ENCODE measurements at regions of chr6 and their contacts with region 1.

Region 1: GRCh38 chr6:142692942-142693341 is 252.0 kb downstream of the HIVEP2 start:
- DNase-seq: peak; percentile 72
- H3K4me3 Mint-ChIP-seq: no peak overlapping the region
- H3K27ac Mint-ChIP-seq: no peak overlapping the region
- H3K4me1 Mint-ChIP-seq: peaks cover 15% of the 10 kb centered on the region
- H3K27me3 Mint-ChIP-seq: no peaks in the 10 kb centered on the region

Region 2: DNA sequence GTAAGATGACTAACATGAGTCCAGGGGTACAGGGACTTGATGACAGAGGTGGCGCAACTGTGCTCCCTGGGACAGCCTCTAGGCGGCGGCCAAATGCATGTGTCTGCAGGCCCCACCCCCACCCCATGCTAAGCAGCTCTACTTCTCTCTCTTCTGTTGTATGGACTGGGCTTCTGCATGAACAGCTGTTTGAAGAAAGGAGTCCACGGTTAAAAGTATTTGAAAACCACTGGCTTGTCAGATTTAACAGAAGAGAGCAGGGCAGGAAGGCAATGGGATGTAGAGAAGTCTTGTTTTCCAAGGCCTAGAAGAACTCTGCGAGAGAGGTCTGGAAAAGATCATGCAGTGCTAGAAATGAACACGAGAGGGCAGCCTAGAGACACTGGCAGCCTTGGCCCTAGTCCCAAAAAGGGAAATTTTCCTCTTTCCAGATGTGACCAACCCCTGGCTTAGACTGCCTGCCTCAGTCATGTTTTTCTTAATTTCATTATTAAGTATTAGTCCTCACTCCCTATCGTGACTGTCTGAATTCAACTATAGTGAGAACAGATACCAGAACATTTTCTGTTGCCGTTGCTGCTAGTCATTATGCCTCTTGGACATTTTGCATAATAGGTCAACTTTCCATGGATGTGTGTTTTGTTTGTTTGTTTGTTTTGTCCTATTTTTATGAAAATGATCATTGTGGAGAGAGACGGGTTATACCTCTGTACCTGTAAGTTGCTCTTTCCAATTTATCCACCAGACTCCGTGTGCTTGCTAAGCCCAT is 126.1 kb before region 1 on chr6:
- CTCF ChIA-PET with region 1: interaction called, 10 read pairs
- POLR2A ChIA-PET with region 1: no interaction called
- intact Hi-C with region 1: loop called (anchors 2 kb)
- DNase-seq: peak; percentile 63
- H3K4me3 Mint-ChIP-seq: no peak overlapping the region
- H3K27ac Mint-ChIP-seq: no peak overlapping the region
- H3K4me1 Mint-ChIP-seq: peaks cover 49% of the 10 kb centered on the region
- H3K27me3 Mint-ChIP-seq: no peaks in the 10 kb centered on the region

Region 3: GRCh38 chr6:142617158-142617557 is 75.8 kb before region 1 on chr6:
- CTCF ChIA-PET with region 1: no interaction called
- POLR2A ChIA-PET with region 1: no interaction called
- intact Hi-C with region 1: no loop called
- DNase-seq: no peak
- H3K4me3 Mint-ChIP-seq: no peak overlapping the region
- H3K27ac Mint-ChIP-seq: no peak overlapping the region
- H3K4me1 Mint-ChIP-seq: no peaks in the 10 kb centered on the region
- H3K27me3 Mint-ChIP-seq: no peaks in the 10 kb centered on the region

Region 4: DNA sequence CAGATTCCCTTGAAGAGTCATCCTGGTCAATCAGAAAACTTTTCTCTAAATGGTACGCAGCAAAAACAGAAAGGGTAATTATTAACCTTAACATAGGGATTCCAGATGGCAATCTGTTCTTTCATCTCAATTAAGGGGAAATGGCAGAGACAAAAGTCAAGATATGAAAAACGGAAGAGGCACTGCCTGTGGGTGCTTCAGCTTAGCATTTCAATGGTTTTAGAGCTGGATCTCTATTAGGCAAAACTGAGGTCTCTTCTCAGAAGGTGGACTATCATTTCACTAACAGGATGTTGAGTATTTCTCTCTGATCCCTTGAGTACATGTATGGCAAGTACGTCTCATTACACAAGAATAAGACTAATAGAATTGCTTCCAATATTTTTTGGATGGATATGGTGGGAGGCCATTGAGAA is 44.9 kb before region 1 on chr6:
- CTCF ChIA-PET with region 1: no interaction called
- POLR2A ChIA-PET with region 1: no interaction called
- intact Hi-C with region 1: no loop called
- DNase-seq: no peak
- H3K4me3 Mint-ChIP-seq: no peak overlapping the region
- H3K27ac Mint-ChIP-seq: no peak overlapping the region
- H3K4me1 Mint-ChIP-seq: no peaks in the 10 kb centered on the region
- H3K27me3 Mint-ChIP-seq: peaks cover 3% of the 10 kb centered on the region

Region 5: DNA sequence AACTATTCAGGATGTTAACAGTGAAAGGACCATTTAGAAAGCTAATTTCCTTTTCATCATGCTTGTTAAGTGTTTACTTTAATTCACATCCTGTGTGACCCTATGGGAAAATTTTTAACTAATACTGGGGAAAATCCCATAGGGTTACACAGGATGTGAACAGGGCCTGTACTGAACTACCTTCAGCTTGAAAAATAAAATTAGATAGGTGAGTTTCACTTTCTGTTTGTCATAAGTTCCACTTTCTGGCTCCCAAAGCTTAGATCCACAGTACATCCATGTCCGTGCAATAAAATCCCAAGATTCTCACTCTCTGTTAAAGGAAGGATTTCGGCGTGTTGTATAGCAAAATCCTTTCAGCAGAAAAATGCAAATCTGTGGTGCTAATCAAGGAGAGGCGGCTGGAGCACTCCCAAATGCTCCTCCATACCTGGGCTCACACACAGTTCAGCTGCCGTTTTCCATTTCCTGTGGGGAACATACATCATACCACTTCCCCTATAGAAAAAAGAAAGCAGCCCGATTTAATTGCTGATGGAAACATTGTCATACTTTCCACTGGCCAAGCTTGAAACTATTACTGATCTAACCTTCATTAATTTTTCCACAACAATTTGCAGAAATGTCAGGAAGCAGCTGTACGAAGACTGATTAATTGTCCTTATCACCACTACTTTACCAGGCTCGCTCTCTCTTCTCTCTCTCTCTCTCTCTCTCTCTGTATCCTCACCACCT is 126.8 kb after region 1 on chr6:
- CTCF ChIA-PET with region 1: interaction called, 3 read pairs
- POLR2A ChIA-PET with region 1: no interaction called
- intact Hi-C with region 1: loop called (anchors 5 kb)
- DNase-seq: peak; percentile 63
- H3K4me3 Mint-ChIP-seq: peak overlapping the region; percentile 79
- H3K27ac Mint-ChIP-seq: peak overlapping the region; percentile 97
- H3K4me1 Mint-ChIP-seq: peaks cover 77% of the 10 kb centered on the region
- H3K27me3 Mint-ChIP-seq: peaks cover 2% of the 10 kb centered on the region

Region 6: DNA sequence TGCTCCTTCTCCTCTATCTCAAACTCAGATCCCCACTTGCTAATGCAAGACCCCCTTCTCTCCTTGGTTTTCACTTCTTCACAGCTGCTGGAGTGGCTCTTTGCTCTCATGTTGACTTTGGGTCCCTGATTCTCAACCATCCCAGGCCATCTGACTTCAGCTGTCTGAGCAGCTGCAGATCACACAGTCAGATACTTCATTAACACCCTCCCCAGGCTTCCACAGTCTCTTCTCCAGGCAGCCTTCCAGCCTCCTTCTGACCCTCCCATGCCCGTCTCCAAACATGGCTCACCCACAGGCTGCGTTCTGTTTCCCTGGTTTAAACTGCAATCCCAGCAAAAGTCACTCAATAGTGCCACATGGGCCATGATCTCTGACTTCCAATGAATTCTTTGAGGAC is 186.6 kb after region 1 on chr6:
- CTCF ChIA-PET with region 1: no interaction called
- POLR2A ChIA-PET with region 1: no interaction called
- intact Hi-C with region 1: no loop called
- DNase-seq: no peak
- H3K4me3 Mint-ChIP-seq: no peak overlapping the region
- H3K27ac Mint-ChIP-seq: no peak overlapping the region
- H3K4me1 Mint-ChIP-seq: peaks cover 88% of the 10 kb centered on the region
- H3K27me3 Mint-ChIP-seq: no peaks in the 10 kb centered on the region

Region 7: DNA sequence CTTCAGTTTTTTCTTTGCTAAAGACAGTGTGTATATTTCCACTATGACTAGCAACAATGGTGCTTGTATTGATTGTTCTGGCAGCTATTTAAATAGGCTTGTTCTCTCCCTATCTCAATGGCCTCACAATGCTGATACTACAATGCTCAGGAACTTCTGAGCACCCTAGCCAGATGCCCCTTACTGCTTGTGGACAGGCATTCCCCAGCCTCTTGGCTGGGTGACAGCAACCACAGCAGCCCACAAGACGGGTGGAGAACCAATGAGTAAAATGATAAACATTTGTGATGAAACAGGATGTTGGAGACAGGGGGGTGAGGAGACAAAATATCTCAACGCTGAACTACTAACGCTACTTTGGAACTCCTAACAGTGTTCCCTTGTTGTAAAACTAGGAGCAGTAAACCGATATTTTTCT is 209.7 kb after region 1 on chr6:
- CTCF ChIA-PET with region 1: no interaction called
- POLR2A ChIA-PET with region 1: no interaction called
- intact Hi-C with region 1: loop called (anchors 5 kb)
- DNase-seq: peak; percentile 87
- H3K4me3 Mint-ChIP-seq: peak overlapping the region; percentile 56
- H3K27ac Mint-ChIP-seq: peak overlapping the region; percentile 87
- H3K4me1 Mint-ChIP-seq: peaks cover 59% of the 10 kb centered on the region
- H3K27me3 Mint-ChIP-seq: no peaks in the 10 kb centered on the region

Region 8: GRCh38 chr6:143279385-143279784 is 586.4 kb after region 1 on chr6:
- CTCF ChIA-PET with region 1: interaction called, 8 read pairs
- POLR2A ChIA-PET with region 1: no interaction called
- intact Hi-C with region 1: loop called (anchors 2 kb)
- DNase-seq: peak; percentile 13
- H3K4me3 Mint-ChIP-seq: no peak overlapping the region
- H3K27ac Mint-ChIP-seq: no peak overlapping the region
- H3K4me1 Mint-ChIP-seq: peaks cover 2% of the 10 kb centered on the region
- H3K27me3 Mint-ChIP-seq: no peaks in the 10 kb centered on the region

Region 9: GRCh38 chr6:143427109-143427817 is 734.3 kb after region 1 on chr6:
- CTCF ChIA-PET with region 1: interaction called, 23 read pairs
- POLR2A ChIA-PET with region 1: no interaction called
- intact Hi-C with region 1: loop called (anchors 1 kb)
- DNase-seq: peak; percentile 78
- H3K4me3 Mint-ChIP-seq: no peak overlapping the region
- H3K27ac Mint-ChIP-seq: no peak overlapping the region
- H3K4me1 Mint-ChIP-seq: peaks cover 6% of the 10 kb centered on the region
- H3K27me3 Mint-ChIP-seq: no peaks in the 10 kb centered on the region